B cell (primary cell): ENCODE measurements at regions of chr9 and their contacts with region 1.

Region 1: DNA sequence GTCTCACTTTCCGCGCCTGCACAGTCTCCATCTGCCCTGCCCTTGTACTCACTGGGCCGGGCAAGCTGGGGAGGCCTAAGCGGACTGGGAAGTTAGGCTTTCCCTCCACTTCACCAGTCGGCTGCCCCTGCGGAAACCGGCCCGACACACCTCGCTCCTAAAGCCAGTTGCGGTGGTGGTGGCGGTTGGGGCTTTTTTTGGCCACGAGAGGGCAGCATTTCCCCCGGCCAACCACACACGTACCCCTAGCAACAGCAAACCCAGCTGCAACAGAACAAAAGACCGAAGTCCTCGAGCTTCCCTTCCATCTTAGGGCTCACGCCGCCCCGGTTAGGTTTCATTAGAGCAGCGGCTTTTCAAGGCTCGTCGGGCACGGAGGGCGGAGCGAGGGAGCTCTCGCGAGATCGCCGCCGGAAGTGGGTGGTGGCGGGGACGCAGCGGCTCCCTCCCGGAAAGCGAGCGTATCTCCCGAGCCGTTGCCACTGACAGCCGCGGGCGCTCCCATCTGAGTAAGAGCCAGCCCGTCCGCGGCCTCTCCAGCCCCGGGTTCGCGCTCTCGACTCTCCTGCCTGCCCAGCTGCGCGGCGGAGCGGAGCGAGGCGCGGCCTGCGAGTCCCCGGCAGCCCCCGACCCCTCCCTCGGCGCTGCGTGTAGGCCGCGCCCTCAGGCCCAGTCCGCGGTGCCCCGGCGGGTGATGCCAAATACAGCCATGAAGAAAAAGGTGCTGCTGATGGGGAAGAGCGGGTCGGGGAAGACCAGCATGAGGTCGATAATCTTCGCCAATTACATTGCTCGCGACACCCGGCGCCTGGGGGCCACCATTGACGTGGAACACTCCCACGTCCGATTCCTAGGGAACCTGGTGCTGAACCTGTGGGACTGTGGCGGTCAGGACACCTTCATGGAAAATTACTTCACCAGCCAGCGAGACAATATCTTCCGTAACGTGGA is at the start of gene RRAGA:
- DNase-seq: peak; percentile 97
- ATAC-seq: peak; percentile 89
- H3K4me3 ChIP-seq: peak within 1 kb of the TSS; percentile 69 to 92 (median 78)
- H3K4me3 Mint-ChIP-seq: peak within 1 kb of the TSS; percentile 98
- H3K27ac ChIP-seq: peak within 1 kb of the TSS; percentile 92 to 95
- H3K27ac Mint-ChIP-seq: peak within 1 kb of the TSS; percentile 99
- H3K4me1 ChIP-seq: peaks cover 24 to 32% of the 10 kb centered on the region in 2 donors
- H3K4me1 Mint-ChIP-seq: peaks cover 36% of the 10 kb centered on the region
- H3K27me3 ChIP-seq: no peaks in the 10 kb centered on the region
- H3K27me3 Mint-ChIP-seq: no peaks in the 10 kb centered on the region
- CTCF ChIP-seq: peak; percentile 79
- total RNA-seq, gene RRAGA: 49.2 and 52.1 TPM in 2 replicates

Region 2: DNA sequence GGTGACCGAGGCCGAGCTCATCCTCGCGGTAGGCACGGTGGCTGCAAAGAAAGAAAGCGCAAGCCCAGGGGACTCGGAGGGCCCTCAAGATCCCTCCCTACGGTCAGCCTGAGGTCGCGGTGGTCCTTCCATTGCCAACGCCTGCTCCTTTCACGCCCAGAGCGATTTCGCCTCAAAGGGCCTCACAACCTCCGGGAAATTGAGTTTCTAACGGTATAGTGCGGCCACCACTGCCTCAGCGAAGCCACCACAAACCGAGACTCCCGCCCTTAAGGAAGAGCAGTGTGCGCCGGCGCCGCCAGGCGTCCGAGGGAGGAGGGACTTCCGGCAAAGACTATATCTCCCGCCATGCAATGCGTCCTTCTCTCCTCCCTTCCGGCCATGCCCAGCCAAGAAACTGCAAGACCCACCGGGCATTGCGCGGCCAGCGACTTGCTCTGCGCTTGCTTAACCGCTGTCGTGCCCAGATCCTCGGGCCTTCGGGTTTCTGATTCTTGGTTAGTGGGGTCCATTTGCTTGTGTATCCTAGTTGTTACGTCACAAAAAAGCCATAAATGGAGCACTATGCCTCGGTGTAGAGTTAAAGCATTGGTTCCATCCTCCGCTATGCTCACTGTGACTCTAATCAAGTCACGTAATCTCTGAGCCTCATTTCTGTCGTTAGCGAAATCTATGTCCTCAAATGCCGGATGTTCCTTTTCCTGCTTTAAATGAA is 53.5 kb after region 1 on chr9 and contains the start of gene HAUS6:
- CTCF ChIA-PET with region 1: interaction called, 7 read pairs
- POLR2A ChIA-PET with region 1: interaction called, 11 read pairs
- intact Hi-C with region 1: loop called (anchors 1 kb)
- DNase-seq: peak; percentile 96
- ATAC-seq: peak; percentile 95
- H3K4me3 ChIP-seq: peak within 1 kb of the TSS; percentile 63 to 92 (median 82)
- H3K4me3 Mint-ChIP-seq: peak within 1 kb of the TSS; percentile 98
- H3K27ac ChIP-seq: peak within 1 kb of the TSS; percentile 53 to 88
- H3K27ac Mint-ChIP-seq: peak within 1 kb of the TSS; percentile 94
- H3K4me1 ChIP-seq: peaks cover 3 to 16% of the 10 kb centered on the region in 2 donors
- H3K4me1 Mint-ChIP-seq: peaks cover 22% of the 10 kb centered on the region
- H3K27me3 ChIP-seq: no peaks in the 10 kb centered on the region
- H3K27me3 Mint-ChIP-seq: no peaks in the 10 kb centered on the region
- CTCF ChIP-seq: peak; percentile 38
- total RNA-seq, gene HAUS6: 13.5 and 14.6 TPM in 2 replicates

Region 3: DNA sequence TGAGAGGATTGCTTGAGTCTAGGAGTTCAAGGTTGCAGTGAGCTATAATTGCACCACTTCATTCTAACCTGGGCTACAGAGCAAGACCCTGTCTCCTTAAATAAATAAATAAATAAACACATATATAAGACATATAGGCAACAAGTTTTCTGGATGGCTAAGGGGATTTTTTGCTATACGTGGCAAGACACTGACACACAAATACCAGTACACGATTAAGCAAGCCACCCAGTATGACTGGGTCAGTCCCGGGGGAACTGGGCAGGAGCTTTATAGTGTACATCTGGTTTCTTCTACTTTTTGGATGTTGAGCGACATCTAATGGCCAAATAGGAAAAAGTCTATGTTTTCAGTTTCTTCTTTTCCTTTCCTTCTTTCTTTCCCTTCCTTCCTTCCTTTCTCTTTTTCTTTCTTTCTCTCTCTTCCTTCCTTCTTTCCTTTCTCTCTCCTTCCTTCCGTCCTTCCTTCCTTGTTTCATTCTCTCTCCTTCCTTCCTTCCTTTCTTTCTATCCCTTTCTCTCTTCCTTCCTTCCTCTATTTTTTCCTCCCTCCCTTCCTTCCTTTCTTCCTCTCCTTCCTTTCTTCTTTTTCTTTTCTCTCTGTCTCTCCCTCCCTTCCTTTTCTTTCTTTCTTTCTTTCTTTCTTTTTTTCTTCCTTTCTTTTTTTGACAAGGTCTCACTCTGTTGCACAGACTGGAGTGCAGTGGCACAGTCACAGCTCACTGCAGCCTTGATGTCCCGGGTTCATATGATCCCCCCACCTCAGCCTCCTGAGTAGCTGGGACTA is 125.1 kb after region 1 on chr9:
- CTCF ChIA-PET with region 1: interaction called, 31 read pairs
- POLR2A ChIA-PET with region 1: interaction called, 8 read pairs
- intact Hi-C with region 1: loop called (anchors 1 kb)
- DNase-seq: peak; percentile 61
- ATAC-seq: peak; percentile 87
- H3K4me3 ChIP-seq: no peak overlapping the region
- H3K4me3 Mint-ChIP-seq: no peak overlapping the region
- H3K27ac ChIP-seq: no peak overlapping the region
- H3K27ac Mint-ChIP-seq: no peak overlapping the region
- H3K4me1 ChIP-seq: peaks cover 0 to 4% of the 10 kb centered on the region in 2 donors
- H3K4me1 Mint-ChIP-seq: peaks cover 6% of the 10 kb centered on the region
- H3K27me3 ChIP-seq: no peaks in the 10 kb centered on the region
- H3K27me3 Mint-ChIP-seq: no peaks in the 10 kb centered on the region
- CTCF ChIP-seq: peak; percentile 83

Region 4: DNA sequence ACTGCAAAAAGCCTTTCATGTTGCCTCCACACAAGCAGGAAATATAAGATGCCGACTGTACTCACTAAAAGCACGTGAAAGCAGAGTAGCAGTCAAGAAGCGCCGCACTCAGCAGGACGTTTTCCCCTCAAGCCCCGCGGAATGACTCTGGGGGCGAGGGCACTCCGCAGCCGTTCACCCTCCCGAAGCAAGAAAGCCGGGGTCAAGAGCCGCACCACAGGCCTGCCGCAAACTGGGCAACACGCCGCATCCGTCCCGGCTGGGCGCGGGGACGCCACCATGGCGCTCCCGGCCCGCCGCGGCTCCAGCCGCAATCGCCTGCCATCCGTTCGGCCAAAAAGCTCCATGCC is 330.4 kb after region 1 on chr9:
- CTCF ChIA-PET with region 1: interaction called, 4 read pairs
- POLR2A ChIA-PET with region 1: interaction called, 7 read pairs
- intact Hi-C with region 1: loop called (anchors 1 kb)
- DNase-seq: no peak
- ATAC-seq: peak; percentile 41
- H3K4me3 ChIP-seq: peak overlapping the region; percentile 66 to 84 (median 81)
- H3K4me3 Mint-ChIP-seq: peak overlapping the region; percentile 98
- H3K27ac ChIP-seq: peak overlapping the region; percentile 87 to 93
- H3K27ac Mint-ChIP-seq: peak overlapping the region; percentile 98
- H3K4me1 ChIP-seq: peaks cover 19 to 20% of the 10 kb centered on the region in 2 donors
- H3K4me1 Mint-ChIP-seq: peaks cover 40% of the 10 kb centered on the region
- H3K27me3 ChIP-seq: no peaks in the 10 kb centered on the region
- H3K27me3 Mint-ChIP-seq: no peaks in the 10 kb centered on the region
- CTCF ChIP-seq: no peak

Region 5: GRCh38 chr9:19456996-19457692 is 407.9 kb after region 1 on chr9:
- CTCF ChIA-PET with region 1: interaction called, 19 read pairs
- POLR2A ChIA-PET with region 1: interaction called, 4 read pairs
- intact Hi-C with region 1: loop called (anchors 1 kb)
- DNase-seq: peak; percentile 80
- ATAC-seq: peak; percentile 95
- H3K4me3 ChIP-seq: peak overlapping the region in 1 of 5 experiments; percentile 19
- H3K4me3 Mint-ChIP-seq: peak overlapping the region; percentile 23
- H3K27ac ChIP-seq: no peak overlapping the region
- H3K27ac Mint-ChIP-seq: no peak overlapping the region
- H3K4me1 ChIP-seq: peaks cover 7% of the 10 kb centered on the region in 2 donors
- H3K4me1 Mint-ChIP-seq: peaks cover 13% of the 10 kb centered on the region
- H3K27me3 ChIP-seq: no peaks in the 10 kb centered on the region
- H3K27me3 Mint-ChIP-seq: no peaks in the 10 kb centered on the region
- CTCF ChIP-seq: peak; percentile 99

Region 6: GRCh38 chr9:20684035-20684872 is 1635.0 kb after region 1 on chr9 and contains the start of gene FOCAD:
- CTCF ChIA-PET with region 1: no interaction called
- POLR2A ChIA-PET with region 1: no interaction called
- intact Hi-C with region 1: loop called (anchors 2 kb)
- DNase-seq: peak; percentile 96
- ATAC-seq: peak; percentile 99
- H3K4me3 ChIP-seq: peak within 1 kb of the TSS; percentile 71 to 92 (median 83)
- H3K4me3 Mint-ChIP-seq: peak within 1 kb of the TSS; percentile 95
- H3K27ac ChIP-seq: peak within 1 kb of the TSS; percentile 20 to 70
- H3K27ac Mint-ChIP-seq: peak within 1 kb of the TSS; percentile 48
- H3K4me1 ChIP-seq: peaks cover 15 to 17% of the 10 kb centered on the region in 2 donors
- H3K4me1 Mint-ChIP-seq: peaks cover 17% of the 10 kb centered on the region
- H3K27me3 ChIP-seq: no peaks in the 10 kb centered on the region
- H3K27me3 Mint-ChIP-seq: no peaks in the 10 kb centered on the region
- CTCF ChIP-seq: no peak
- total RNA-seq, gene FOCAD: 10.1 and 13.8 TPM in 2 replicates